ENCODE measurements at regions of chr21 and their contacts with region 1.

Region 1: DNA sequence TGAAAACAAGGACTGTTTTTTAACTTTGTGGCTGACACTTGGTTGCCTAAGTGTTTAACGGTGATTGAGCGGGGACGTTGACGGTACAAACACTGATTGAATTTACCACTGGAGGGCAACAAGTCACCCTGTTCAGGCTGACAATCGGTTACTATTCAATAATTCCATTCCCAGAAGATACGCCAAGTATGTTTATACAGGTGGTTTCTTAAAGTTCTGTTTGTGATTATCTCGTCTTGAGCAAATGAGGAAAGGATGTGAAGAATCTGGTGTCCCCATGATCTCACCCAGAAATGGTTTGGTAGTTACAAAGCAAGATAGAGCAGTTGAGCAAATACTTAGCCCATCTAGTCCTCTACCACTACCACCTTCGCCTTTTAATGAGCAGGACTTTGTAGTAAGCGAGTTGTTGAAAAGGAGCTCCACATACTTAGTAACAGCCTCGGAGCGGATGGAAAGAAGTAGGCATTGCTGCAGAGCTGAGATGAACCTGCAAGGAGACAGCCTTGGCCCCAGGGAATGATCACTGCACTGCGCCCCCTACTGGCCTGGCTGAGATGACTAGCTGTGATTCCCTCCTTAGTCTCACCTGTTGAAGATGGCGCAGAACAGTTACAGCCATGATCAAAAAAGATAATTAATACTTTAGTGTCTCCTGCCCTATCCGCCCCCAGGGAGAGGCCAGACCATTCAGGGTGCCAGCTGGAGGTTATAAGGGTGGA is 36.3 kb downstream of the IFNAR1 start:
- DNase-seq: peak; percentile 78
- CTCF ChIP-seq: peak; percentile 94

Region 2: DNA sequence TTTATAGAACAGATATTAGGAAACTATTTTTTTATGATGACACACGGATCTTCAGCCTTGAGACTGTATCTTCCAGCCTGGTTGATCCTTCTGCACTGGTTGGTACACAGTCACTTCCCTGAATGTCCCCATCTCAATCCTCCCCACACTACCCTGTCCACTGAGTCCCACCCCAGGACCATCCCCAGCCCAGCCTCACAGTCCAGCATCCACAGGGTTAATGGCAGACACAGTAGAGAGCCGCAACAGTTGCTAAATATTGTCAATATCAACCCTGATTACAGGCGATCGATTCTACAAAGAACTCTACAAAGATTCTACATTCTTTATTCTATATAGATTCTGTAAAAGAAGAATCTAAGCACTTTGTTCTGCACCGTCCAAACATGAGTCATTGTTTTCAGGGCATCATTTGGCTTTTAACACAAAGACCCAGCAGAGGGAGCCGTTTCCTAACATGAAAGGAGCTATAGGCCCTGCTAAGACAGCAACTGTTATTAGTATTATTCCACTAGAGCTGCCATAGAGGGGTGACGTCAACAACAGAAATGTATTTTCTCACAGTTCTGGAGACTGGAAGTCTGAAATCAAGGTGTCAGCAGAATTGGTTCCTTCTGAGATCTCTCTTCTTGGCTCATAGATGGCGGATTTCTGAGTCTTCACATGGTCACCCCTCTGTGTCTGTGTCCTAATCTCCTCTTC is 161.4 kb before region 1 on chr21:
- in situ Hi-C with region 1: loop called (anchors 10 kb)
- DNase-seq: peak; percentile 74
- CTCF ChIP-seq: peak; percentile 65

Region 3: DNA sequence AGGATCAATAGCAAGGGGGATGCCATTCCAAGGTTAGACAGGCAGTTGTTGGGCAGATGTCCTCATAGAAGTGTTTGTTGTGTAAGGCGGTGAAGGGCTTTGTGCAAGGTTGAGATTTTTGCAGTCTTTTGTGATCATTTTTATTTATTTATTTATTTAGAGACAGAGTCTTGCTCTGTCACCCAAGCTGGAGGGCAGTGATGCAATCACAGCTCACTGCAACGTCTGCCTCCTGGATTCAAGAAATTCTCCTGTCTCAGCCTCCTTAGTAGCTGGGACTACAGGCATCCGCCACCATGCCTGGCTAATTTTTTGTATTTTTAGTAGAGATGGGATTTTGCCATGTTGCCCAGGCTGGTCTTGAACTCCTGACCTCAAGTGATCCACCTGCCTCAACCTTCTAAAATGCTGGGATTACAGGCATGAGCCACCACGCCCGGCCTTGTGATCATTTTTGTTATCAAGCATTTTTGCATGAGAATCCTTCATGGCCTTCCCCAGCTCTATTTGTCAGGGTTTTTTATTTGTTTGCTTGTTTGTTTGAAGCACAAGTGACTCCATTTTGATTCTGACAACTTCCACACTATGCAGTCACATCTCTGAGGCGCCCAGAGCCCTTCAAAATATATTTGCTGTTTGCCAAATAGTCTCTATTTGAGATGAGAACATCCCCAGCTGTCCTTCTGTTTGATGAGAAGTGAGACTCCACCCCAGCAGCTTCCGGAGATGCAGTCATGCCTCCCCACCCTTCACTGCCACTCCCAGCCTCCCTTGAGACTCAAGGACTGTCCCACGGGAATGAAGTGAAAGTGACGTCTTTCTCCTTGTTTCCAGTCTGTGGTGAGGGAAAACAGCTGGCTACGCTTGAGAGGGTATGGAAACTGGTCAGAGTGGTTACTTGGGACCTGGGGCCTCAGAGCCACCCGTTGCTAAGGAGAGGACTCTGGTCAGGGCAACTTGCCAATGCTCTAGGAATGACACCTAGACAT is 80.7 kb after region 1 on chr21:
- in situ Hi-C with region 1: loop called (anchors 5 kb)
- DNase-seq: peak; percentile 72
- CTCF ChIP-seq: no peak

Region 4: GRCh38 chr21:34061983-34062382 is 700.9 kb after region 1 on chr21:
- in situ Hi-C with region 1: no loop called
- DNase-seq: no peak
- CTCF ChIP-seq: no peak